ENCODE measurements at regions of chr14 and their contacts with region 1.

Region 1: DNA sequence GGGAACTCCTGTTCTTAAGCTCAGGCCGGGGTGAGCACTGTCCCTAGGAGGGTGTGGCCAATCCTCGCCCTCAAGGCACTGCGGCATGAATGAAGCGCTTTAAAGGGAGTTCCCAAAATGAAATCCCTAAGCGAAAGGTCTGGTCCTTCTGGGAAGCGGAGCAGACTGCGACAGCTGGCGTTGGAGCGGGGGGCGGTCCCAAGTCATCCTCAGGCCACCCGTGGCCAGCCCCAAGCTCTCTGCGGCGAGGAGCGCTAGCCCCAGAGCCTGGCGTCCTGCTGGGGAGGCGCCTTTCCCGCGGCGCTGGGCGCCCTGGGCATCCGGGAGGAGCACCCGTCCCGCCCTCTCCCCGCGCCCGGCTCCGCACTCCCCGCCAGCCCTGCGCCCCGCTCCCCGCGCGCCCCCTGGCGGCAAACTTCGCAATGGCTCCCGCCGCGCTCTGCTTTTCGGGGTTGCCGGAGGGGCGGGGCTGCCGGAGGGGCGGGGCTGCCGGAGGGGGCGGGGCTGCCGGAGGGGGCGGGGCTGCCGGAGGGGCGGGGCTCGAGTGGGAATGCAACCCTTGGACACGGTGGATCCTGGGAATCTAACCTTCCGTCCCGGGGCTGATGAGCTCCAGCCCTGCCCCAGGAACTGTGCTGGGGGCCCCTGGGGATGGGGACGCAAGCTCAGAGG is 25.4 kb downstream of the ZBTB42 start:
- DNase-seq: peak; percentile 97
- ATAC-seq: peak; percentile 93
- H3K4me3 Mint-ChIP-seq: peak overlapping the region; percentile 73
- H3K27ac Mint-ChIP-seq: no peak overlapping the region
- H3K4me1 Mint-ChIP-seq: peaks cover 13% of the 10 kb centered on the region
- H3K27me3 Mint-ChIP-seq: peaks cover 13% of the 10 kb centered on the region

Region 2: GRCh38 chr14:104689109-104689880 is 137.0 kb before region 1 on chr14 and contains the start of gene INF2:
- CTCF ChIA-PET with region 1: no interaction called
- POLR2A ChIA-PET with region 1: no interaction called
- intact Hi-C with region 1: loop called in 1 of 2 experiments (anchors 1 kb)
- DNase-seq: peak; percentile 73
- ATAC-seq: peak; percentile 69
- H3K4me3 Mint-ChIP-seq: peak within 1 kb of the TSS; percentile 72
- H3K27ac Mint-ChIP-seq: peak within 1 kb of the TSS; percentile 60
- H3K4me1 Mint-ChIP-seq: peaks cover 34% of the 10 kb centered on the region
- H3K27me3 Mint-ChIP-seq: no peaks in the 10 kb centered on the region
- total RNA-seq, gene INF2: 60.8 to 66.0 TPM

Region 3: DNA sequence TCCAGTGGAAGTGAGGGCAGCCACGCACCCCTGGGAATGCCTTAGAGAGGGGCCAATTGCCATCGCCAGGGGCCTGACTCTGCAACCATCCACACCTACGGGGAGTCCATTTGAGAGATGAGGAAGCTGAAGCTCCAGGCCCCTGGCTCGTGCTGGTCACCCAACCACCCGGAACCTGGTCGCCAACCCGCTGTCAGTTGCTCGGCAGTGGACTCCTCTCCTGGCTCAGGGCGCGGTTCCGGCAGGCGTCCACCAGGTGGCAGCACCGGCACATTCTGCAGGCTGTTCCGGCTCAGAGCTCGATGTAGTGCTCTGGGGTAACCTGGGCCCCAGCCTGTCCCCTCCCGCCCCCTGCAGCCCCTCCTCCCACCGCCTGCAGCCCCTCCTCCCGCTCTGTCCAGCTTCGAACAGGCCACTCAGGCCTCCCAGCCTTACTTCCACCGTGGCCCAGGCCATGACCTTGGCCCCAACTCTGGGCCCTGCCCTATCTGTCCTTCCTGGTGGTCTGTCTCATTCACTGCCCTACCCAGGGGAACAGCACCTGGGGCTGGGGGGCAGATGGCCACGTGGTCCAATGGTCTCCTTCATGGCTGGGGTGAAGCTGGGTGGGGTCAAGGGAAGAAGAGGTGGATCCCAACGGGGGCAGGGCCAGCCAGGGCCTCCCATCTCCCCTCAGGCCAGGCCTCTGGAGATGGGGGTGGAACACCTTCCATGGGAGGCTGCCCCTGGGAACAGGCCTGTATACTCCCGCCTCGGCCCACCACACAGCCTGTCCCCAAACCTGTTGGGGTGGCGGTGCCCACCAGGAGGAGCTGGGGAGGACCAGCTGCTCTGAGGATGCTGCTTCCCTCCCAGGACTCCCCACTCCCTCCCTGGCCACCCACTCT is 57.6 kb before region 1 on chr14:
- CTCF ChIA-PET with region 1: interaction called, 26 read pairs
- POLR2A ChIA-PET with region 1: interaction called, 4 read pairs
- intact Hi-C with region 1: loop called (anchors 1 kb)
- DNase-seq: peak; percentile 96
- ATAC-seq: peak; percentile 95
- H3K4me3 Mint-ChIP-seq: no peak overlapping the region
- H3K27ac Mint-ChIP-seq: no peak overlapping the region
- H3K4me1 Mint-ChIP-seq: peaks cover 8% of the 10 kb centered on the region
- H3K27me3 Mint-ChIP-seq: no peaks in the 10 kb centered on the region

Region 4: GRCh38 chr14:104865644-104866441 is 39.5 kb after region 1 on chr14:
- CTCF ChIA-PET with region 1: interaction called, 5 read pairs
- POLR2A ChIA-PET with region 1: no interaction called
- intact Hi-C with region 1: loop called in 1 of 2 experiments (anchors 1 kb)
- DNase-seq: peak; percentile 62
- ATAC-seq: peak; percentile 57
- H3K4me3 Mint-ChIP-seq: peak overlapping the region; percentile 60
- H3K27ac Mint-ChIP-seq: no peak overlapping the region
- H3K4me1 Mint-ChIP-seq: peaks cover 2% of the 10 kb centered on the region
- H3K27me3 Mint-ChIP-seq: peaks cover 7% of the 10 kb centered on the region

Region 5: GRCh38 chr14:104985675-104986525 is 159.6 kb after region 1 on chr14 and contains the start of gene CLBA1:
- CTCF ChIA-PET with region 1: no interaction called
- POLR2A ChIA-PET with region 1: no interaction called
- intact Hi-C with region 1: loop called in 1 of 2 experiments (anchors 1 kb)
- DNase-seq: peak; percentile 93
- ATAC-seq: peak; percentile 99
- H3K4me3 Mint-ChIP-seq: peak within 1 kb of the TSS; percentile 64
- H3K27ac Mint-ChIP-seq: peak within 1 kb of the TSS; percentile 47
- H3K4me1 Mint-ChIP-seq: peaks cover 5% of the 10 kb centered on the region
- H3K27me3 Mint-ChIP-seq: no peaks in the 10 kb centered on the region
- total RNA-seq, gene CLBA1: 1.1 to 1.9 TPM

Measured in activated CD4-positive, alpha-beta T cell treated with anti-CD3 and anti-CD28 coated beads for 36 hours (primary cell).